ENCODE measurements at regions of chr10 and their contacts with region 1.

Region 1: DNA sequence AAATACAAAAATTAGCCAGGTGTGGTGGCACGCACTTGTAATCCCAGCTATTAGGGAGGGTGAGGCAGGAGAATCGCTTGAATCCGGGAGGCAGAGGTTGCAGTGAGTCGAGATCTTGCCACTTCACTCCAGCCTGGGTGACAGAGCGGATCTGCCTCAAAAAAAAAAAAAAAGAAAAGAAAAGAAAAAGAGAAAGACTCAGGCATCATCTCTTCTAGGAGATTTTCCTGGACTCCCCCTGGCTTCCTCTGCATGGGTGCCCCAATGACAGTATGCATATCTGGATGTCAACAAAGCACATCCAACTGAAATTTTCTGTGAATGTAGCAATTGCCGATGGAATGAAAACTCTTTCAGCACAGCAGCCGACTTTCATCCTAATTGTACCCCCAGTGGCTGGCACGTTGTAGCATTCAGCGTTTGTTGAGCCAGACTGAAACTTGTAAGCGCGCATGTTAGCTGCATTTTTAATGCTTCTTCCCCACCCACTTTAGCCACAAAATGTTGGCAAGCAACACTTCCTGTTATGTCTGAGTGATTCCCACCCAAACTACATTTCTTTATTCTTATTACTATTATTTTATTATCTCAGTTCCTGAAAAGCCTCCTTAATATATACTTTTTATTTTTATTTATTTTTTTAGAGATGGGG is 70.2 kb downstream of the PRTFDC1 start:
- DNase-seq: peak in 7 of 9 donors; percentile 42 to 68 (median 63)
- ATAC-seq: peak; percentile 81
- H3K4me3 ChIP-seq: peak overlapping the region; percentile 44
- H3K4me3 Mint-ChIP-seq: peak overlapping the region; percentile 72 to 88 (median 86)
- H3K27ac ChIP-seq: peak overlapping the region; percentile 53
- H3K27ac Mint-ChIP-seq: peak overlapping the region; percentile 36 to 99 (median 95)
- H3K4me1 ChIP-seq: peaks cover 15 to 54% of the 10 kb centered on the region in 2 donors
- H3K4me1 Mint-ChIP-seq: peaks cover 27 to 72% (median 65%) of the 10 kb centered on the region in 7 donors
- H3K27me3 ChIP-seq: no peaks in the 10 kb centered on the region
- H3K27me3 Mint-ChIP-seq: no peaks in the 10 kb centered on the region

Region 2: DNA sequence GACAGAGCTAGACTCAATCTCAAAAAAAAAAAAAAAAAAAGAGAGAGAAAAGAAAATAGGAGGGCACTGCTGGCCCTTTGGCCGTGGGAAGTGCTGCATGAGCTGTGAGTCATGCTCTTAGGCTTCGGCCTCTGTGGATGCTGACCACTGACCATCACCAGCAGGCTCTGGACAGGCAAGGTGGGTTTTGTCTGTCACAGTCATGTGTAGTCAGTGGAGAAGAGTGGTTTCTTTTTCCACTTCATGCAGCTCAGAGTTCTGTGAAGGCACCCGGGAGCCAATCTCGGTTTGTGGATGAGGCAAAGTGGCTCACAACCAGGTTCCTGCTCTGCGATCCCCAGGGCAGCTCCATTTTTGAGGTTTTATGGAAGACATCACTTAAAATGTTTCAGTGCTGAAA is 12.1 kb after region 1 on chr10:
- CTCF ChIA-PET with region 1: interaction called, 4 read pairs
- POLR2A ChIA-PET with region 1: interaction called, 33 read pairs
- intact Hi-C with region 1: loop called in 1 of 2 experiments (anchors 1 kb)
- DNase-seq: no peak
- ATAC-seq: peak; percentile 41
- H3K4me3 ChIP-seq: peak overlapping the region; percentile 38
- H3K4me3 Mint-ChIP-seq: peak overlapping the region; percentile 62 to 90 (median 80)
- H3K27ac ChIP-seq: peak overlapping the region; percentile 29
- H3K27ac Mint-ChIP-seq: peak overlapping the region; percentile 82 to 98 (median 95)
- H3K4me1 ChIP-seq: peaks cover 18 to 26% of the 10 kb centered on the region in 2 donors
- H3K4me1 Mint-ChIP-seq: peaks cover 25 to 58% (median 55%) of the 10 kb centered on the region in 7 donors
- H3K27me3 ChIP-seq: no peaks in the 10 kb centered on the region
- H3K27me3 Mint-ChIP-seq: no peaks in the 10 kb centered on the region

Region 3: GRCh38 chr10:24916365-24916764 is 34.2 kb after region 1 on chr10:
- CTCF ChIA-PET with region 1: no interaction called
- POLR2A ChIA-PET with region 1: no interaction called
- intact Hi-C with region 1: no loop called
- DNase-seq: no peak
- ATAC-seq: no peak
- H3K4me3 ChIP-seq: no peak overlapping the region
- H3K4me3 Mint-ChIP-seq: no peak overlapping the region
- H3K27ac ChIP-seq: no peak overlapping the region
- H3K27ac Mint-ChIP-seq: no peak overlapping the region
- H3K4me1 ChIP-seq: no peaks in the 10 kb centered on the region
- H3K4me1 Mint-ChIP-seq: peaks cover 6 to 24% (median 18%) of the 10 kb centered on the region in 7 donors
- H3K27me3 ChIP-seq: no peaks in the 10 kb centered on the region
- H3K27me3 Mint-ChIP-seq: no peaks in the 10 kb centered on the region

Region 4: GRCh38 chr10:24952707-24953645 is 70.8 kb after region 1 on chr10:
- CTCF ChIA-PET with region 1: interaction called, 6 read pairs
- POLR2A ChIA-PET with region 1: interaction called, 3 read pairs
- intact Hi-C with region 1: loop called in 1 of 2 experiments (anchors 1 kb)
- DNase-seq: peak; percentile 31 to 66 (median 55)
- ATAC-seq: peak; percentile 89
- H3K4me3 ChIP-seq: peak overlapping the region; percentile 55
- H3K4me3 Mint-ChIP-seq: peak overlapping the region; percentile 76 to 89 (median 86)
- H3K27ac ChIP-seq: peak overlapping the region; percentile 59
- H3K27ac Mint-ChIP-seq: peak overlapping the region; percentile 49 to 91 (median 83)
- H3K4me1 ChIP-seq: peaks cover 4 to 6% of the 10 kb centered on the region in 2 donors
- H3K4me1 Mint-ChIP-seq: peaks cover 7 to 30% (median 18%) of the 10 kb centered on the region in 7 donors
- H3K27me3 ChIP-seq: no peaks in the 10 kb centered on the region
- H3K27me3 Mint-ChIP-seq: no peaks in the 10 kb centered on the region